PC-9 (cell line): ENCODE measurements at regions of chr3 and their contacts with region 1.

Region 1: GRCh38 chr3:168213920-168214319 is 118.2 kb upstream of the GOLIM4 start:
- DNase-seq: no peak
- H3K4me3 ChIP-seq: no peak overlapping the region
- H3K27ac ChIP-seq: no peak overlapping the region
- H3K4me1 ChIP-seq: no peaks in the 10 kb centered on the region
- H3K27me3 ChIP-seq: no peaks in the 10 kb centered on the region
- CTCF ChIP-seq: no peak

Region 2: DNA sequence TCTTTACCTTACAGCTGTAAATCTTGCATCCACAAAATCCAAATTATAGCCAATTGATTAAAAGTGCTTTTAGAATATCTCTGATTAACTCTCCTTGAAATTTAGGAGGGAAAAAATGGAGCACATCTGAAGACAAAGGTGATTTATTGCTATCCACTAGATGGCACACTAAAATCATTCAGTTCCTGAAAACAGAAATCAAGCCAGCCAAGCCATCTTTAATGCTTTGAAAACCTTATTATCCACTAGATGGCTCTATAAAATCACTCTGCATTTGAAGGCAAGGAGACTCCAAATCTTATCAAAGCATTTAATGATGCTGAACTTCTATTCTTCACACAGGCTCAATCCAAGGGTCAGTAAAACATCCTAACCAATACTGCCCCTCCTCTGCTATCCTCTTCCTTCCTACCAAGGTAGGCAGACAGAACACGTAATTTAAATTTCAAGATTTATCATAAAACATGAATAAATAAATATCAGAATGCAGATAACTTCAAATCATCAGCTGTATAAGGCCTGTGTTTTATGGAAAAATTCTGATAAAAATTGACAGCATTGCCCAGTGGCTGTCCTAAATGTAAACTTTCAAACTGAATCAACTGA is 166.6 kb before region 1 on chr3:
- CTCF ChIA-PET with region 1: no interaction called
- POLR2A ChIA-PET with region 1: no interaction called
- intact Hi-C with region 1: loop called (anchors 2 kb)
- DNase-seq: peak in 1 of 2 experiments; percentile 79
- H3K4me3 ChIP-seq: no peak overlapping the region
- H3K27ac ChIP-seq: no peak overlapping the region
- H3K4me1 ChIP-seq: no peaks in the 10 kb centered on the region
- H3K27me3 ChIP-seq: no peaks in the 10 kb centered on the region
- CTCF ChIP-seq: peak; percentile 89

Region 3: DNA sequence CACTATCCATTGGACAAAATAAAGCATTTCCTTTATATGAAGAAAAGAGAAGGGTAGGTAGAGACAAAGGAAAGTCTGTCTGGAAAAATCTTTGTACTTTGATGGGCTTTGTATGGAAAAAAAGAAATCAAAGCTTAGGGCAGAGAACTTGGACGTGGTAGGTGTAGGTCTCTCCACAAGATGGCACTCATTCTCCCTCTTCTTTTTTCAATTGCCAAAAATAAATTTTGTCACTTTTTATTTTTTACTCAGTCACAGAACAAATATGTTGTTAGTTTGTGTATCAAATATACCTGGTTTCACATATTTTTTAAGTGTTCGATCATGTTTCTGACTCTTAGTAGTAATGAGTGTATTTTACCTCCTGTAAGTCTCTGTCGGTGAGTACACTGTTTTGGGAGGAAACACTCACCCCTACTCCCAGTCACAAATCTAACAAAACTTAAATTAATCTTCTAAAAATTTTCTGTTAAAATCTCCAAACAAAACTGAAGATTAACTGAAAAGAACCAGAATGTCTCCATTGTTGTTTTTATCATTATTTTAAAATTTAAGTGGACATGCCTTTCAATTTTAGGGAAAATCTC is 297.6 kb after region 1 on chr3:
- CTCF ChIA-PET with region 1: interaction called, 5 read pairs
- POLR2A ChIA-PET with region 1: no interaction called
- intact Hi-C with region 1: loop called (anchors 1 kb)
- DNase-seq: no peak
- H3K4me3 ChIP-seq: no peak overlapping the region
- H3K27ac ChIP-seq: no peak overlapping the region
- H3K4me1 ChIP-seq: no peaks in the 10 kb centered on the region
- H3K27me3 ChIP-seq: no peaks in the 10 kb centered on the region
- CTCF ChIP-seq: peak; percentile 74

Region 4: DNA sequence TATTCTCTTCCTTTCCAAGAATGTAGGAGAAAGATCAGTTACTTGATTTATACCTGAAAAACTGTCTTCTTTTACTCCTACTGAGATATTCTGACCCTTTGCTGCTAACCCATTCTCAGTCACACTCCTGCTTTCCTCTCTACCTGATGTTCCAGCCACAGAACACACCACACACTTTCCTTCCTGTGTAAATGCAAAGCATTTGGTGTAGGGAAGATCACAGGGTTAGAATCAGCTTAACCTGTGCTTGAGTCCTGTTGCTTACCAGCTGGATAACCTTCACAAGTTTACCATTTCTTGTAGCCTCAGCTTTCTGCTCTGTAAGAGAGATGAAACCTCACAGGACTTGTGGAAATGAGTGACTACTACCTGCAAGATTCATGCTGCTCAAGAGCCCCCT is 371.6 kb after region 1 on chr3:
- CTCF ChIA-PET with region 1: no interaction called
- POLR2A ChIA-PET with region 1: no interaction called
- intact Hi-C with region 1: no loop called
- DNase-seq: no peak
- H3K4me3 ChIP-seq: no peak overlapping the region
- H3K27ac ChIP-seq: no peak overlapping the region
- H3K4me1 ChIP-seq: no peaks in the 10 kb centered on the region
- H3K27me3 ChIP-seq: no peaks in the 10 kb centered on the region
- CTCF ChIP-seq: no peak

Region 5: GRCh38 chr3:168847291-168847883 is 633.5 kb after region 1 on chr3:
- CTCF ChIA-PET with region 1: interaction called, 25 read pairs
- POLR2A ChIA-PET with region 1: no interaction called
- intact Hi-C with region 1: loop called (anchors 1 kb)
- DNase-seq: peak in 1 of 2 experiments; percentile 38
- H3K4me3 ChIP-seq: no peak overlapping the region; the same call in 1 of the 2 replicates
- H3K27ac ChIP-seq: no peak overlapping the region
- H3K4me1 ChIP-seq: no peaks in the 10 kb centered on the region
- H3K27me3 ChIP-seq: peaks cover 19% of the 10 kb centered on the region; the same call in 1 of the 2 replicates
- CTCF ChIP-seq: peak; percentile 89

Region 6: DNA sequence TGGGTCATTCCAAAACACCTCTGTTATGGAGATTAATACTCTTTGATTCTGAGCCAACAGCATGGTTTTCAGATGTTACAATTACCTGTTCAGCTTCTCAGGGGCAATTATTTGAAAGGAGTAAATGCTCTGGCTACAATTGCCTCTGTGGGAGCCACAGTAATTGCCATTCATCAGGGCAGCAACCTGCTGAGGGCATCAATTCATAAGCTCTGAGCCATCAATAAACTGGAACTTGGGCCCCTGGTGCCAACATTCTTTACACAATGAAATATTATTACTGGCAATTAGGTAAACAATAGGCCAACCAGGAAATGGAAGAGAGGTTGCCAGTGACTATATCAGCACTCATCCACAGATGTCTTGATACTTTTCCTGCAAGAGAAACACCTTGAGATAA is 788.8 kb after region 1 on chr3:
- CTCF ChIA-PET with region 1: no interaction called
- POLR2A ChIA-PET with region 1: no interaction called
- intact Hi-C with region 1: no loop called
- DNase-seq: no peak
- H3K4me3 ChIP-seq: no peak overlapping the region
- H3K27ac ChIP-seq: no peak overlapping the region
- H3K4me1 ChIP-seq: peaks cover 25% of the 10 kb centered on the region
- H3K27me3 ChIP-seq: no peaks in the 10 kb centered on the region
- CTCF ChIP-seq: no peak

Region 7: DNA sequence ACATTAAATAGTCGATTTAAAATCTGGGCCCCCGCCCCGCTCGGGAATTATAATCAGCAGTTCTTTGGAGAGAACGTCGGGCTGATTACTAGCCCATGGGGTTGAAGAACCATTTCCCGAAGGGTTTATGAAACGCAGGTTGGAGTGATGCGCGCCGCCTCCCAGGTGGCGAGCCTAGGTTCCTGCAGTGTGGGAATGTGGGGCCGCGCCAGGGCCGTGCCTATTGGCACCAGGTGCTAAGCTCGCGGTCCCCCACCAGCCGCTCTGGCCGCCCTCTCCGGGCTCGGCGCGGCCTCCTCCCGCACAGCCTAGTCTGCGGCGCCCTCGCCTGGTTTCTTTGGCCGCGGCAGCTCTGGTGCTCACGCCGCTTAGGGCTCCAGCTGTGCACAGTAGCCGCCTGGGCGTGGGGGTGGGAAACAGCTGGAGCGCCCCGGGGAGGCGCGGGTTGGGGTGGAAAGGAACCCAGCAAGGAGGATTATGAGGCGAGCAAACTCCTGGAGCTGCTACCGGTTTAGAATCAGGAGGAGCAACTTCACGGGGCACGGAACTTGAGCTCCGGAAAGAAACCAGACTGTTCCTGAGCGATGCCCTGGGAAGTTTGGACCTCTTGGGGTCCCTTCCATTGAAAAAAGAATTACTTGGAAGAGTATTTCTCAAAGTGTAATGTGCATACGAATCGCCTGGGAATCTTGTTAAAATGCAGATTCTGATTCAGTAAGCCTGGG is 1455.2 kb after region 1 on chr3:
- CTCF ChIA-PET with region 1: interaction called, 6 read pairs
- POLR2A ChIA-PET with region 1: no interaction called
- intact Hi-C with region 1: loop called (anchors 1 kb)
- DNase-seq: peak; percentile 78 to 88
- H3K4me3 ChIP-seq: peak overlapping the region; percentile 61
- H3K27ac ChIP-seq: no peak overlapping the region
- H3K4me1 ChIP-seq: peaks cover 18% of the 10 kb centered on the region; the same call in 1 of the 2 replicates
- H3K27me3 ChIP-seq: peaks cover 4% of the 10 kb centered on the region; the same call in 1 of the 2 replicates
- CTCF ChIP-seq: peak; percentile 91